ENCODE measurements at regions of chr17 and their contacts with region 1.

Region 1: DNA sequence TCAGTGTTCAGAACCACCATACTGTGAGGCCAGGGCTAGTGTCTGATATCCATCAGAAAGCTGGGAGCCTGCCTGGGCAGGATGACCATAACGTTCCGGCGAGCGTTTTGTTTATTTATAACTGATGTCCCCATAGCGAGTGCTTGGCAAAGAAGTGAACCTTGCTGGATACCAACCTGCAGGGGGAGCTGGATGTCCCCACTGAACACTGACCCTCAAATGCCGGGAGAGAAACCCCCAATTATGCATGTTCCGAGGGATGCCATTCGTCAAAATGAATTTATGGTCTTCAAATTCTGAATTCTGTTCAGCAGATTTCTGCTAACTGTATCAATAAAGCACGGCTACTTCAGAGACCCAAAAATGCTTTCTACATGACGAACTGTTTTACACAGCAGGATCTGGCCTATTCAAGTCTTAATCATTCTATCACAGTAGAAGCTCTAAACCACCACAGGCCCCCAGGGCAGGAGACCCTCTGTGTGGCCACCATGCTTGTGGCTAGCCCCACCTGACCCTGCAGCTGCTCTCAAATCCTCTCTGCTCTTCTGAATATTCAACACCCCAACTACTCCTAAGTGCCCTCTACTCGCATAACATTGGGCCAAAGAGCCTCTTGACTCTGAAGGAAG is 15.2 kb downstream of the MED24 start:
- H3K4me3 Mint-ChIP-seq: no peak overlapping the region
- H3K27ac Mint-ChIP-seq: no peak overlapping the region
- H3K4me1 Mint-ChIP-seq: peaks cover 32% of the 10 kb centered on the region
- H3K27me3 Mint-ChIP-seq: no peaks in the 10 kb centered on the region

Region 2: DNA sequence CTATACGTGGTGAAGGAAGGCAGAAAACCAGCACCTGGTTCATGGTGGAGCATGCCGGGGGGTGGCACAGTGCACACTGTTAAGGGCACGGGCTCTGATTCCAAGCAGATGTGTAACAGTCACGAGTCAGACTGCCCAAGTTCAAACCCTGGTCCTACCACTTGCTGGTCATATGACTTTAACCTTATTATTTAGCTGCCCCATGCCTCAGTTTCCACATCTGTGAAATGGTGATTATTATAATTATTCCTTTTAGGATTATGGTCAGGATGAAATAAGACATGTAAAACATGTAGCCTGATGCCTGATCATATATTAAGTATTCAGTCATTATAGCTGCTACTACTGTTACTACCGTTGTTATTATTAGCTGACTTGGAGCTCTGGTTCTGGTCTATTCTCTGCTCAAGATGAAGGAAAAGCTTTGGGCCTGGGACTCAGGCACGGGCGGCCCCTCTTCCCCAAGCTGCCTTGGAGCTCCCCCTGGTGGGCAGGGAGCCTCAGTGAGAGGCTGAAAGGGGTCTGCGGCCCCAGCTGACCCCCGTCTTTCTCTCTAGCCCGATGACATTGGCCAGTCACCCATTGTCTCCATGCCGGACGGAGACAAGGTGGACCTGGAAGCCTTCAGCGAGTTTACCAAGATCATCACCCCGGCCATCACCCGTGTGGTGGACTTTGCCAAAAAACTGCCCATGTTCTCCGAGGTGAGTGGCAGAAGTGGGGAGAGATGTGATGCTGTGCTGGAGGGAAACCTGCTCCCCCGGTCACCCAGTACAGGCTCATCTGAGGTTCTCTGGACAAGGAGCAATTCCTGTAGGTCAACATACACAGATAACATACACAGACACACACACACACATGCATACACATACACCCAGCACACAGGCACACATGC is 47.4 kb after region 1 on chr17:
- intact Hi-C with region 1: loop called (anchors 10 kb)
- H3K4me3 Mint-ChIP-seq: no peak overlapping the region
- H3K27ac Mint-ChIP-seq: no peak overlapping the region
- H3K4me1 Mint-ChIP-seq: no peaks in the 10 kb centered on the region
- H3K27me3 Mint-ChIP-seq: no peaks in the 10 kb centered on the region